ENCODE measurements at regions of chr2 and their contacts with region 1.

Region 1: GRCh38 chr2:7427293-7428060 is 510.3 kb downstream of the RNF144A start:
- DNase-seq: no peak
- H3K4me3 ChIP-seq: no peak overlapping the region
- H3K27ac ChIP-seq: no peak overlapping the region
- H3K4me1 ChIP-seq: peaks cover 4 to 15% (median 6%) of the 10 kb centered on the region in 3 donors
- H3K27me3 ChIP-seq: peaks cover 0 to 85% (median 3%) of the 10 kb centered on the region in 4 donors
- CTCF ChIP-seq: peak in 5 of 6 experiments; percentile 54 to 72 (median 60)
- POLR2A ChIP-seq: no peak

Region 2: GRCh38 chr2:8685697-8686358 is 1258.4 kb after region 1 on chr2:
- intact Hi-C with region 1: loop called (anchors 5 kb)
- DNase-seq: no peak
- H3K4me3 ChIP-seq: peak overlapping the region; percentile 67 to 81 (median 76)
- H3K27ac ChIP-seq: peak overlapping the region; percentile 79 to 96 (median 87)
- H3K4me1 ChIP-seq: peaks cover 4 to 45% (median 18%) of the 10 kb centered on the region in 3 donors
- H3K27me3 ChIP-seq: peaks cover 0 to 4% (median 0%) of the 10 kb centered on the region in 4 donors
- CTCF ChIP-seq: peak; percentile 96 to 99 (median 97)
- POLR2A ChIP-seq: peak in 1 of 4 donors; percentile 9